ENCODE measurements at regions of chr7 and their contacts with region 1.

Region 1: DNA sequence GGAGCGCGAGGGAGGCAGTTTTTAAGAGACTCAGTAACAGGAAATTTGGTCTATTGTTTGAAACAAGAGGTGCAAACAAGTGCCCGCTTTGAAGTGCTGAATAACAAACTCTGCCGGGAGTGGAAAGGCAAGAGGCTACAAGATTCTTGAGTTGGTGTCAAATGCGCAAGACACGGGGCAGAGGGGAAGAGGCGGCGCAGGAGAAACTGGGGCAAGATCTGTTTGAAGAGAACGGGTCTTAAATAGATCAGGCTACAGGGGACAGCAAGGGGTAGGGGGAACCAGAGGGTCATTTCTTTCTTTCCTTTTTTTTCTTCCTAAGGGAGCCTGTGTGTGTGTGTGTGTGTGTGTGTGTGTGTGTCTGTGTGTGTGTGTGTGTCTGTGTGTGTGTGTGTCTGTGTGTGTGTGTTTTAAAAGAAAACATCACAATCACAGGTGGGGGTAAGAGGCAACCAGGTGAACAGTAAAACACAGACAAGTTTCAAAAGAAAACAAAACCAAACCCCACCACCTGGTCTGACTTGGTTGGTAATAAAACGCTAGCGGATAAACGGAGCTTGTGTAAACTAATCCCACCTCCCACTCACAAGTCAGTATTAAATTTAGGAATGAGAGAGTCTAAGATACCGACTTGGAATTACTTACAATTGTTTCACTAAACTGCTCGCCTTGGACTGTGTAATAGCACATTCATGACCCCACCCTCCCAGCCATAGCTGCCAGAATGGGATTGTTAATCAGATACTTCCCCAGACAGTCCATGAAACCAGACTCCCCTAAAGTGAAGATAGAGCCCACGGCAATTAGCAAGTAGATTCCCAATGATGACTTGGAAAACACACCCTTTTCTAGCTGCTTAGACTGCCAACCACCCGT is 13.1 kb upstream of the CUX1 start:
- DNase-seq: no peak
- ATAC-seq: peak; percentile 35
- H3K4me3 ChIP-seq: peak overlapping the region; percentile 29; the same call in 1 of the 2 replicates
- H3K27ac ChIP-seq: no peak overlapping the region
- H3K4me1 ChIP-seq: no peaks in the 10 kb centered on the region; the same call in 1 of the 2 replicates
- H3K27me3 ChIP-seq: peaks cover 11% of the 10 kb centered on the region
- CTCF ChIP-seq: no peak

Region 2: GRCh38 chr7:101781439-101781838 is 22.9 kb before region 1 on chr7:
- CTCF ChIA-PET with region 1: interaction called, 11 read pairs
- POLR2A ChIA-PET with region 1: no interaction called
- intact Hi-C with region 1: no loop called
- DNase-seq: no peak
- ATAC-seq: no peak
- H3K4me3 ChIP-seq: no peak overlapping the region
- H3K27ac ChIP-seq: no peak overlapping the region
- H3K4me1 ChIP-seq: no peaks in the 10 kb centered on the region
- H3K27me3 ChIP-seq: no peaks in the 10 kb centered on the region
- CTCF ChIP-seq: no peak

Measured in PC-3 (cell line).